ENCODE measurements at regions of chr20 and their contacts with region 1.

Region 1: GRCh38 chr20:35092524-35093266 is at the start of gene TRPC4AP:
- DNase-seq: peak; percentile 89 to 93 (median 93)
- H3K4me3 ChIP-seq: peak within 1 kb of the TSS; percentile 79 to 99 (median 94)
- H3K27ac ChIP-seq: peak within 1 kb of the TSS; percentile 80 to 92
- H3K4me1 ChIP-seq: peaks cover 13 to 35% (median 23%) of the 10 kb centered on the region in 4 experiments
- H3K27me3 ChIP-seq: no peaks in the 10 kb centered on the region

Region 2: DNA sequence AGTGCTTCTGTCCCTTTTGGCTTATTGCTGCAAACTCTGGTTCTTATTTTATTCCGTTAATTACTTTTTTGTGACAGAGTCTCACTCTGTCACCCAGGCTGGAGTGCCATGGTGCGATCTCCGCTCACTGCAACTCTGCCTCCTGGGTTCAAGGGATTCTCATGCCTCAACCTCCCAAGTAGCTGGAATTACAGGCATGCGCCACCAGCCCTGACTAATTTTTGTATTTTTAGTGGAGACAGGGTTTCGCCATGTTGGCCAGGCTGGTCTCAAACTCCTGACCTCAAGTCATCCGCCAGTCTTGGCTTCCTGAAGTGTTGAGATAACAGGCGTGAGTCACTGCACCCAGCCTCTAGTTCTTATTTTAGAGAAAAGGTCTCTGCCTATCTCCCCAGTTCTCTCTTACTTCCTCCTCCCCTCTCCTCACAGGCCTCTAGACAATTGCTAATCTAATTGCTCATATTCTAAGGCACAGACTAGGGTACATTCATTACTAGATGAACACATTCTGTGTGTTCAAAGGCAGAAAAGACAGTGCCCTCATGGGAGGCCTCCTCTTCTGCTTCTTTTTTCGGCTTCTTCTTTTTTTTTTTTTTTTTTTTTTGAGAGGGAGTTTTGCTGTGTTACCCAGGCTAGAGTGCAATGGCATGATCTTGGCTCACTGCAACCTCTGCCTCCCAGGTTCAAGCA is 27.5 kb after region 1 on chr20:
- CTCF ChIA-PET with region 1: interaction called, 13 read pairs
- POLR2A ChIA-PET with region 1: interaction called, 3 read pairs
- DNase-seq: peak; percentile 34 to 78 (median 68)
- H3K4me3 ChIP-seq: no peak overlapping the region
- H3K27ac ChIP-seq: no peak overlapping the region
- H3K4me1 ChIP-seq: peaks cover 2 to 12% (median 8%) of the 10 kb centered on the region in 4 experiments
- H3K27me3 ChIP-seq: no peaks in the 10 kb centered on the region

Region 3: GRCh38 chr20:35207950-35208611 is 115.4 kb after region 1 on chr20:
- CTCF ChIA-PET with region 1: interaction called, 40 read pairs
- POLR2A ChIA-PET with region 1: no interaction called
- DNase-seq: peak; percentile 76 to 91 (median 85)
- H3K4me3 ChIP-seq: no peak overlapping the region
- H3K27ac ChIP-seq: no peak overlapping the region
- H3K4me1 ChIP-seq: no peaks in the 10 kb centered on the region
- H3K27me3 ChIP-seq: no peaks in the 10 kb centered on the region